H1 (cell line): ENCODE measurements at regions of chr2 and their contacts with region 1.

Region 1: DNA sequence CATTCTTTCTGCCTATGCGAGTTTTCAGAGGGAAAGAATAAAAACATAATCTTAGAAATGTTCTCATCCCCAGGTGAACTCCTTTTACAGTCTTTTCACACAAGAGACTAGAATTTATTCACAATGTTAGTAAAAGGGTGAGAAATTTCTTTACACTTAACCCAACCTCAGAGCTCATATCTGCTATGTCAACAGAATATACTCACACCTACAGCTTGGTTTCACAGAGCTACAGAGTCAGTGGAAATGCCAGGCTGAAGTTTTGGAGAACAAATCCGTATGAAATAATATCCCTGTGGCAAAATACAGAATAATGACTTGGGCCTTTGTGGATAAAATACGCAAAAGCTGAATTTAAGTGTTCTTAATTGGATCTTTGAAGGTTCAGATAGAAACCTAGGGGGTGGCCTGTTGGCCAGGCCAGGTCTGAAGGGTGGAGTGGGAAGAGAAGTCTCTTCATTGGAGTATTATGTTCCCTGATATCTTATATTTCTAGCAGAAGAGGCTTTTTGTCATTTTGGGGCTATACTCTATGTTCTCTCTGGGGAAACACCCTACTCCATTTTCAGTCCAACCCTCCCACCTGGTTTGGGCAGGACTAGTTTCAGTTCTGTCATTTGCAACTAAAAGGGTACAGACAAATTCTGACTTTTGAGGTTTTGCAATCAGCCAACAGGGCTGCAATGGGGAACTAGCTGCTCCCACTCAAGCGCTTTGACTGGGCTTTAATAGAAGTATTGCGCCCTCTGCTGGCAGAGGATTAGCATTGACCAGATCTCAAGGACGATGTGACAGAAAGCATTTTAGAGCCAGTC is 25.7 kb downstream of the FBXO48 start:
- DNase-seq: peak; percentile 29 to 79
- H3K4me3 ChIP-seq: no peak overlapping the region
- H3K27ac ChIP-seq: no peak overlapping the region
- H3K4me1 ChIP-seq: no peaks in the 10 kb centered on the region
- H3K27me3 ChIP-seq: no peaks in the 10 kb centered on the region
- CTCF ChIP-seq: peak; percentile 46 to 98 (median 92)
- EP300 ChIP-seq: no peak
- POLR2A ChIP-seq: no peak
- RAD21 ChIP-seq: peak; percentile 91 to 97

Region 2: DNA sequence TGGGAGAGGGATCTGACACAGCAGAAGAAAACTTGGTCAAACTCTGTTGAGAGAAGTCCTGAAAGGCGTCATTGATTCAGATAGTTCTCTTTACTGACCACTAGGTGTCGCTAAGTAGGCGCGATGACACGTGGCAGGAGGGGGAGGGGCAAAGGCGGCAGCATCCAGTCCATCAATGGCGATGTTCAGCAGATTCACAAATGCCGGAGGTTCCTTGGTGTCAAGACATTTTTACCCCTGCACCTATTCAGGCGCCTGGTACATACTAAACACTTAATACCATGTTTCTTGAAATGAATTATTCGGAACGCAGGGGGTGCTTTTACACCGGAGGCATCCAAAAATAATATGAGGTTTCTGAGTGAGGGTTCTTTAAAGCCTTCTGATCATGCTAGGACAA is 79.3 kb before region 1 on chr2:
- CTCF ChIA-PET with region 1: interaction called, 36 read pairs
- POLR2A ChIA-PET with region 1: interaction called, 3 read pairs
- DNase-seq: peak; percentile 38 to 76
- H3K4me3 ChIP-seq: no peak overlapping the region
- H3K27ac ChIP-seq: no peak overlapping the region
- H3K4me1 ChIP-seq: no peaks in the 10 kb centered on the region; a peak in 1 of 7 replicates
- H3K27me3 ChIP-seq: peaks cover 0 to 7% (median 3%) of the 10 kb centered on the region in 4 experiments; a peak in 3 of 7 replicates
- CTCF ChIP-seq: peak; percentile 77 to 92 (median 88)
- EP300 ChIP-seq: peak in 1 of 2 experiments; percentile 52; a peak in 1 of 3 replicates
- POLR2A ChIP-seq: no peak
- RAD21 ChIP-seq: peak; percentile 76 to 82

Region 3: DNA sequence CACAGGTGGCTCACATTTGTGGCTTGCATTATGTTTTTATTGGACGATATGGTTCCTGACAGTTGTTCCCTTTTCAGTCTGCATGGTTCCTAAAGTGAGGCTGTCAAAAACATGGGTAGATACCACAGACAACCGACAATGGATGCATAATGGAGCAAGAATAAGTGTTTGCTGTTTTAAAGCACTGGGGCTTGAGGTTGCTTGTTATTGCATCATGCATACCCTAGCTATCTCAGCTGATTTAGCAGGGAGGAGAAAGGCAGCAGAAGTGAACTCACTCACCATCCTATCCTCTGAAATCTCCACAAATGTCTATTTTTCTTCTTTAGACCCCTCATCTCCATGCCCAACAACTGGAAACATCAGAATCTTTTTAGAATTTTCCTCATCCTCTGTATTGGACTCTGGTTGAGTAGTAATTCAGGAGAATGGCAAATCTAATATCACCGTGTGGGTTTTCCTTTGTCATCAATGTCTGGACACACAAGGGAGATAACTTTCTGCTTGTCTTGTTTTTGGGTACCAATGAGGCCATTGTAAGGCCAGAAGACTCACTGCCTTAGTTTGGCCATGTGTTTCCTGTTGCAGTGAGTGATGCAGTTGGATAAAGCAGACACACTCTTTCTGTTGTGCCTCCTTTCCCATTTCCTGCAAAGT is 21.0 kb before region 1 on chr2:
- CTCF ChIA-PET with region 1: interaction called, 51 read pairs
- POLR2A ChIA-PET with region 1: interaction called, 3 read pairs
- DNase-seq: no peak
- H3K4me3 ChIP-seq: no peak overlapping the region
- H3K27ac ChIP-seq: no peak overlapping the region
- H3K4me1 ChIP-seq: peaks cover 6 to 12% (median 8%) of the 10 kb centered on the region in 4 experiments; a peak in 5 of 7 replicates
- H3K27me3 ChIP-seq: no peaks in the 10 kb centered on the region; a peak in 1 of 7 replicates
- CTCF ChIP-seq: no peak
- EP300 ChIP-seq: no peak
- POLR2A ChIP-seq: no peak
- RAD21 ChIP-seq: no peak

Region 4: DNA sequence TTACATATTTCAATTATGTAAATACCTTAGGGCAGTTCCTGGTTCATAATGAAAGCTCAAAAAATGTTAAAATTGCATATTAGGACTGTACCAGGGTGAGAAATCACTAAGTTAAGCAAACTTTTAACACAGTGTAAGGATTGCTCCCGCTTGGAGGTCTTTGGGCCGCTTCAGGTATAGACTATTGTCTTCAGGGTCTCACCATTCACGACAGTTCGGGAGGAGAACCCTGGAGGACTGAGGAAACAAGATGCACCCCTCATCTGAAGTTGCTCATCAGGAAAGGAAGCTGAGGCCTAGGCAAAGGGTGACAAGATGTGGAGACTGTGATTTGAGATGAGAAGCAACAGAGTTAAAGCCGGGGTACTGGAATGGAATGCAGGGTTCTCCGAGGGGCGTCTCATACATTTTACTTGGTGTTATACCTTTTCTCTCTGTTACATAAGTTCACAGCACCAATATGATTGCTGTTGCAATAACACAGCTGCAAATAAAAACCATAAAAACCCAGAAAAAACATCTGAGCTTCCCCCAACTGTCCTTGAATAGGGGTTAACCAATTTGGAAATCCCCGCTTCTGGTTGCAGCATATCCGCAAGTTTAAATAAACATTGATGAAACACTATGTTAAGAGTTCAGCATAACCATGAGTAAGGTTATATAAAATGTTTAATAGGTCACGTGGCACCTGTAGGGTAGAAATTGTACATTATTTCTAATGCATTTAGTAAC is 14.4 kb before region 1 on chr2:
- CTCF ChIA-PET with region 1: interaction called, 16 read pairs
- POLR2A ChIA-PET with region 1: no interaction called
- DNase-seq: no peak
- H3K4me3 ChIP-seq: no peak overlapping the region
- H3K27ac ChIP-seq: no peak overlapping the region
- H3K4me1 ChIP-seq: no peaks in the 10 kb centered on the region
- H3K27me3 ChIP-seq: no peaks in the 10 kb centered on the region
- CTCF ChIP-seq: no peak
- EP300 ChIP-seq: no peak
- POLR2A ChIP-seq: no peak
- RAD21 ChIP-seq: no peak

Region 5: DNA sequence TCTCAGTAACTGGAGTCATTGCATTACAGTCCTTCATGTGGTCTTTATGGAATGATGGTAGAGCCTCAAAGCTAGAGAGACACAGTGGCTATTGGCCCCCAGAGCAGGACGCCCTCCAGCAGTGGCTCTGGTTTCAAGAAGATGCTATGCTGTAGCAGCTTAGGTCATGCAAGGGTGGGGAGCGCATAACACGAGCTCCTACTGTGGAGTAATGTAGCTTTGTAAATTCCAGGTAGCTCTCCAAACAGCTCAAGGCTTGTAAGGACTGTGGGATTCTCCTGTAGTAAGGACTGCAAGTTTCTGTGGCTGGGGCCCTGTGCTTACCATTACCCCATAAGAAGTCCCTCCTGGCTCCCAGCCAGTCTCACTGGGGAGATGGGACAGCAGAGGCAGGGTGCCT is 41.6 kb after region 1 on chr2:
- CTCF ChIA-PET with region 1: no interaction called
- POLR2A ChIA-PET with region 1: no interaction called
- DNase-seq: no peak
- H3K4me3 ChIP-seq: no peak overlapping the region
- H3K27ac ChIP-seq: no peak overlapping the region
- H3K4me1 ChIP-seq: 0 out of 7 replicates have a peak, but pooled peaks cover 0 to 3% (median 0%) of the 10 kb centered on the region in 4 experiments
- H3K27me3 ChIP-seq: no peaks in the 10 kb centered on the region
- CTCF ChIP-seq: no peak
- EP300 ChIP-seq: no peak
- POLR2A ChIP-seq: no peak
- RAD21 ChIP-seq: no peak

Region 6: DNA sequence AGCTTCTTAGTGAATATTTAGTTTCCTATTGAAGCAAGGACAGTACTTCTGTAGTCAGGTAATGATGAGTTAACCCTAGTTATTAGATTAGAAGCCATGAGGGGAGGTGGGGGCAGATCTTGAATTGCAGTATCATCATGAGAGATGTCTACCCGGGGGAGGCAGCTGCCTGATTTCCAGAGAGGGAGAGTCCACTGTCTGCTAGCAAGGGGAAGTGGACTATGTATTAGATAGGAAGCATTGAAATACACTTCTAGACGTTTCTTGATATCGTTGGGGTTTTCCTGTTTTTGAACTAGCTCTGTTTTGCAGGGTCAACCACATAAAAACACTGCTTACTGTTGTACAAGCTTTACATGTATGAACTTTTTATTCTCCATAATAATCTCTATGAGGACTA is 64.8 kb after region 1 on chr2:
- CTCF ChIA-PET with region 1: no interaction called
- POLR2A ChIA-PET with region 1: no interaction called
- DNase-seq: no peak
- H3K4me3 ChIP-seq: no peak overlapping the region
- H3K27ac ChIP-seq: no peak overlapping the region
- H3K4me1 ChIP-seq: no peaks in the 10 kb centered on the region; a peak in 1 of 7 replicates
- H3K27me3 ChIP-seq: no peaks in the 10 kb centered on the region
- CTCF ChIP-seq: no peak
- EP300 ChIP-seq: no peak
- POLR2A ChIP-seq: no peak
- RAD21 ChIP-seq: no peak

Region 7: DNA sequence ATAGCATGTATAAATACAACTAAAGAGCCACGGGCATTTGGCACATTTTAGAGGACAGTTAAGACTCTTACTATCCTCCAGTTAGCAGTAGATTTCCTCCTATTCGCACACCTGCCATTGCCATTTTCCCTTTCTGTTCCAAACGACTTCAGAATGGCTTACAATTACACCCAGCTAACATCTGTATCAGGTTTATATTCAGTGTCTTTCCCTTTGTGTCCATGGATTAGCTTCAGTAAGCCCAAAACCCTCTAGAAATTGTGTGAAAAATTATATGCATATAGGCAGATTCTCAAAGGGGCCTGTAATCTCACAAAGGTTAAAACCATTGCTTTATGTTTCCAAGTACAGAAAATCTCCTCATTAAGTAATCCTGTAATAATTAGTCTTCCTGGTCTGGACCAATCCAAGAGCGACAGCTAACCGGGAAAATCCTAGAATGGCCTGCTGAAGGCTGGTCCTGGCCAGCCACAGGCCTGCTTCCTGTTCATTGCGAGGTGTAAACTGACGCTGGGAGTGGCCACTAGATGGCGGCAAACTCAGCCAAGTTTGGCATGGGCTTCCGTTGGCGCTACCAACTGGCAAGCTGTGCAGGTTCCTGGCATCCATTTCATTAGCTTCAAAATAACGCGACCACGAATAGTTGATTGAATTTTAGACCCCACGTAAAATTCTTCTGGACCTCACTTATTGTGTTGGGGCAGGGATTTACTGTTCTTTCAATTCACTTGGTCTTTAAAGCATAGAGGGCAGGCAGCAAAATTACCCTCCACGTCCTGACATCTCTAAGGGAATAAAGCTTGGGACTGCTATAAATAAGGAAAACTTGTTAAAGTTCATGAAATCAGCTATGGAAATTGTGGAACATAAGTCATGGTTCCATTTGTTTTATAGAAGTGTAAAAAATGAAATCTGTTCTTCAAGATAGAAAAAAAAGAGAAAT is 310.3 kb after region 1 on chr2:
- CTCF ChIA-PET with region 1: no interaction called
- POLR2A ChIA-PET with region 1: no interaction called
- DNase-seq: peak; percentile 69 to 95
- H3K4me3 ChIP-seq: no peak overlapping the region
- H3K27ac ChIP-seq: no peak overlapping the region
- H3K4me1 ChIP-seq: peaks cover 0 to 3% (median 0%) of the 10 kb centered on the region in 4 experiments; a peak in 1 of 7 replicates
- H3K27me3 ChIP-seq: no peaks in the 10 kb centered on the region
- CTCF ChIP-seq: peak; percentile 93 to 97 (median 96)
- EP300 ChIP-seq: 0 out of 3 replicates have a peak, but pooled peaks of 1 of the 2 experiments have one; percentile 14
- POLR2A ChIP-seq: no peak
- RAD21 ChIP-seq: peak; percentile 87 to 94